ENCODE measurements at regions of chr17 and their contacts with region 1.

Region 1: GRCh38 chr17:29617125-29617480 is 5.6 kb downstream of the CORO6 start:
- DNase-seq: peak; percentile 81 to 96 (median 88)
- ATAC-seq: peak; percentile 69
- H3K4me3 ChIP-seq: peak overlapping the region; percentile 68
- H3K4me3 Mint-ChIP-seq: peak overlapping the region; percentile 91
- H3K27ac ChIP-seq: no peak overlapping the region
- H3K27ac Mint-ChIP-seq: peak overlapping the region; percentile 78
- H3K4me1 ChIP-seq: peaks cover 67% of the 10 kb centered on the region
- H3K4me1 Mint-ChIP-seq: peaks cover 47% of the 10 kb centered on the region
- H3K27me3 ChIP-seq: no peaks in the 10 kb centered on the region
- H3K27me3 Mint-ChIP-seq: no peaks in the 10 kb centered on the region
- CTCF ChIP-seq: peak; percentile 65

Region 2: DNA sequence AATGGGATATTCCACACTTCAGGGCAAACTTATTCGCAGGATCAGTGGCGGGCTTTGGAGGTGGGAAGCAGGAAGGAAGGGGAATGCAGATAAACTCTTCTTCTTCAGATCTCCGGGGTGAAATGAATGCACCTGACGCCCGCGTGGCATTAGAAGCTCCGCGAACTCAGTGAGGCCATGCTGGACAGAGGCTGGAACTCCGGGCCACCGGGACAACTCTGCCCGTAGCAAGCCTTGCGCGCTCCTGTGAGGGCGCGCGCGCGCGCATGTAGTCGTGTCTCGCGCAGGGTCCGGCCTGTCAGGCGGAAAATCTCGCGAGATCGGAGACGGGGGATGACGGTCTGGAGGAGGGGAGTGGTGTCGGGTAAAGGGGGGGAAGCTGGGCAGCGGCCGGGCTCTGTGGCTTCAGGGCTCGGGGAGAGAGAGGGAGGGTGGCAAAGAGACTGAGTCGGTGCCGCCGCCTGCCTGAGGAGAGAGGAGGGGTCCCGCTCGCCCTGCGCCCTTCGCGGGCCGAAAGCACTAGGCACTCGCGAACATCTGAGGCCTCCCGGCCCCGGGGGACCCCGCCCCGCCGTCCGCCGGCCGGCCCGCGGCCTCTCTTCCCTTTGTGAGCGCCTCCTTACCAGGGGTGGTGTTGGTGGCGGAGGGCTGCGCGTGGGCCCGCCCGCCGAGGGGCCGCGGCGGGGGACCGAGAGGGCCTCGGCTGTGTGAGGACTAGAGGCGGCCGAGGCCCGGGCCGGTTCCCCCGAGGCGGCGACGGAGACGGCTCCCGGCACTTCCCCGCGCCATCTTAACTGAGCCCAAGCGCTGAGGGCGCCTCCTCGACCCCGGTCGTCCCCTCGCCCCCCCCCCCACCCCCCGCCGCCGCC is 226.9 kb before region 1 on chr17 and contains the start of gene TAOK1:
- CTCF ChIA-PET with region 1: interaction called, 3 read pairs
- POLR2A ChIA-PET with region 1: no interaction called
- intact Hi-C with region 1: loop called in 1 of 2 experiments (anchors 5 kb)
- DNase-seq: peak; percentile 93 to 99 (median 98)
- ATAC-seq: peak; percentile 89
- H3K4me3 ChIP-seq: peak within 1 kb of the TSS; percentile 88
- H3K4me3 Mint-ChIP-seq: peak within 1 kb of the TSS; percentile 99
- H3K27ac ChIP-seq: peak within 1 kb of the TSS; percentile 79 to 93
- H3K27ac Mint-ChIP-seq: peak within 1 kb of the TSS; percentile 97
- H3K4me1 ChIP-seq: peaks cover 20% of the 10 kb centered on the region
- H3K4me1 Mint-ChIP-seq: peaks cover 47% of the 10 kb centered on the region
- H3K27me3 ChIP-seq: no peaks in the 10 kb centered on the region
- H3K27me3 Mint-ChIP-seq: no peaks in the 10 kb centered on the region
- CTCF ChIP-seq: no peak
- total RNA-seq, gene TAOK1: 33.1 to 33.8 TPM

Region 3: DNA sequence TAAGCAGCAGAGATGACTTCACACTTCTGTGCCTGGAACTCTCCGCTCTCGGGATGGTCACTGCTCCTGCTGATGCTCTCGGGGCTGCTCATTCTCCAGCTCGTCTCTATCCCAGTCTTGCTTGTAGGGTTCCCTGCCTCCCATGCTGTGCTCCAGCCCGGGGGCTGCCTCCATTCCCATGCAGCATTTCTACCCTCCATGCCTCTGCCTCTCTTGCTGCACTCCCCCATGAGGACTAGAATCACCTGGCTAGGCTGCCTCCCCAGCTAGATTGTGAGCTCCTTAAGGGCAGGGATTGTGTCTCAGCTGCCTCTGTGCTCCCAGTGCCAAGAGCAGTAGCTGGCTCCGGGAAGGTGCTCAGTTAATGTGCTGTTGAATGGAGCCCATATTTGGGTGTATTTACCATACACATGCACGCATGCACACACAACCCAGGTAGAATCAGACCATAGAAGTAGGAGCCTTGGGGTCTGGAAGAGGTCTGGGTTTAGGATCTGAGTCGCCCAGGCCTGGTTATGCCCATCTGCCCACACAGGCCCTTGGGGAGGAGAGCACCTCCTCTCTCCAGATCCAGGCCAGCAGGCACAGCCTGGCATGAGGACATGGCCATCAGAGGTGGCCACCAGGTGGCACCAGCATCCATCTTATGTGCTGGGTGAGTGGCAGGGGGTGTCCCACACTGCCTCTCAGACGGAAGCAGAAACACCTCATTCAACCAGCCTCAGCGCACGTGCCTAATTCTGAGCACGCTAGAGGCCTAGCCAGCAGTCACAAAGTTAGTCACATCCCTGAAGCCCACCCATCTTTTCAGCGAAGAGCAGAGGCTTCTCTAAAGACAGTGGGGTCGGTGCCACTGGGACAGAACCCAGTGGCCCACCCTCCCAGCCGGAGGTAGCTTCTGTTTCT is 37.0 kb before region 1 on chr17:
- CTCF ChIA-PET with region 1: interaction called, 48 read pairs
- POLR2A ChIA-PET with region 1: interaction called, 40 read pairs
- intact Hi-C with region 1: loop called (anchors 1 kb)
- DNase-seq: peak; percentile 84 to 95 (median 88)
- ATAC-seq: peak; percentile 99
- H3K4me3 ChIP-seq: no peak overlapping the region
- H3K4me3 Mint-ChIP-seq: peak overlapping the region; percentile 69
- H3K27ac ChIP-seq: no peak overlapping the region
- H3K27ac Mint-ChIP-seq: peak overlapping the region; percentile 41
- H3K4me1 ChIP-seq: peaks cover 27% of the 10 kb centered on the region
- H3K4me1 Mint-ChIP-seq: peaks cover 27% of the 10 kb centered on the region
- H3K27me3 ChIP-seq: no peaks in the 10 kb centered on the region
- H3K27me3 Mint-ChIP-seq: no peaks in the 10 kb centered on the region
- CTCF ChIP-seq: peak; percentile 88

Region 4: DNA sequence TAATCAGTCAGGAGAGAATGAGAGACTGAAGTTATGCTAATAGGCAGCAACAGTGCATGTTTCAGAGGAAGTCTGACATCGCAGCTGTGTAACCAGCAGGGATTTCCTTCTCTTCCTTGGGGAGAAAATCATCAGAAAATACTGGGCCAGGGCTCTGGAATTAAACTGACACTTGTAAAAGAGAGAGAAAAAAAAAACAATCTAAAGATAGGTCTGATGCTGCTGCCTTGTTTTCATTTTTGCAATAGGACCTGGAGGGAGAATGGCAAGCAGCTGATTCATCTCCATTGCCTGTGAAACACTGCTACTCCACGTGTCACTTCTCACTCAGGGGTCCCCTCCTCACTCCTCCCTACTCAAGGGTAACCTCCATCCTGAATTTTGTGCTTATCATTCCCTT is 23.3 kb after region 1 on chr17:
- CTCF ChIA-PET with region 1: interaction called, 19 read pairs
- POLR2A ChIA-PET with region 1: interaction called, 12 read pairs
- intact Hi-C with region 1: no loop called
- DNase-seq: no peak
- ATAC-seq: no peak
- H3K4me3 ChIP-seq: no peak overlapping the region
- H3K4me3 Mint-ChIP-seq: no peak overlapping the region
- H3K27ac ChIP-seq: no peak overlapping the region
- H3K27ac Mint-ChIP-seq: peak overlapping the region; percentile 77
- H3K4me1 ChIP-seq: no peaks in the 10 kb centered on the region
- H3K4me1 Mint-ChIP-seq: peaks cover 12% of the 10 kb centered on the region
- H3K27me3 ChIP-seq: no peaks in the 10 kb centered on the region
- H3K27me3 Mint-ChIP-seq: no peaks in the 10 kb centered on the region
- CTCF ChIP-seq: no peak

Region 5: DNA sequence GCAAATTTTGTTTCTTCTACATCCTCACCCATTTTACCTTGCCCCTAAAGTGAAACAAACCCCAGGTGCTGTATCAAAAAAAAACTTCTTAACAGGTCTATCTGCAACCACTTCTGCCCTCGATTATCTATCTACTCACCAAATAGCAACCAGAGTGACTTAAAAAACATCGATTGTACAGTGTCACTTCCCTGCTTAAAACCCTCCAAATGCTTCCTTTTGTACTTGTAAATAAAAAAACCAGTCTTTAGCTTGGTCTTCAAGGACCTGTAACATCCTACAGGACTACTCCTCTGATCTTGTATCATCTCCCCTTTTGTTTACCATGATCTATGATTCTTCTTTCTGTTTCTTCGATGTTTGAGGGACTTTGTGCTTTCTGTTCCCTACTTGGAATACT is 88.3 kb after region 1 on chr17:
- CTCF ChIA-PET with region 1: interaction called, 16 read pairs
- POLR2A ChIA-PET with region 1: interaction called, 16 read pairs
- intact Hi-C with region 1: no loop called
- DNase-seq: peak in 3 of 14 experiments; percentile 43 to 63 (median 50)
- ATAC-seq: no peak
- H3K4me3 ChIP-seq: peak overlapping the region; percentile 46
- H3K4me3 Mint-ChIP-seq: peak overlapping the region; percentile 71
- H3K27ac ChIP-seq: peak overlapping the region; percentile 81 to 91
- H3K27ac Mint-ChIP-seq: peak overlapping the region; percentile 92
- H3K4me1 ChIP-seq: peaks cover 37% of the 10 kb centered on the region
- H3K4me1 Mint-ChIP-seq: peaks cover 61% of the 10 kb centered on the region
- H3K27me3 ChIP-seq: no peaks in the 10 kb centered on the region
- H3K27me3 Mint-ChIP-seq: no peaks in the 10 kb centered on the region
- CTCF ChIP-seq: no peak

Region 6: DNA sequence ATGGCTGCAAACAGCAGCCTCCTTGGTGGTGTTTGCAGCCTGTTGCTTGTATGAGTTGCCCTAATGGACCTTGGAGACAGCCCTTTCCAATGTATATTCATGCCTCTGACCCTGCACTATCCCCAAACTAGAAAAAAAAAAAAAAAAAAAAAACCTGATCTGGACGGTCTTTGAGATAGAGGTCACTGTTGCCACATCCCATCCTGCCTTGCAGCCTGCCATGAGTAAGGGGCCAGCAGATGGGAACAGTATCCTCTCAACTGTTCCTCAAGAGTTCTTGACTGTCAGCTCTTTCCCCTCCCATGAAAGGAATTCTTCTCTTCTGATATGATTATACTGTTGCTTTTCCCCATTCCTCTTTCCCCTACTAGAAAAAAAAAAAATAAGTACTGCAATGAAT is 160.6 kb after region 1 on chr17:
- CTCF ChIA-PET with region 1: interaction called, 27 read pairs
- POLR2A ChIA-PET with region 1: interaction called, 16 read pairs
- intact Hi-C with region 1: loop called in 1 of 2 experiments (anchors 1 kb)
- DNase-seq: no peak
- ATAC-seq: no peak
- H3K4me3 ChIP-seq: no peak overlapping the region
- H3K4me3 Mint-ChIP-seq: no peak overlapping the region
- H3K27ac ChIP-seq: no peak overlapping the region
- H3K27ac Mint-ChIP-seq: no peak overlapping the region
- H3K4me1 ChIP-seq: peaks cover 3% of the 10 kb centered on the region
- H3K4me1 Mint-ChIP-seq: peaks cover 9% of the 10 kb centered on the region
- H3K27me3 ChIP-seq: no peaks in the 10 kb centered on the region
- H3K27me3 Mint-ChIP-seq: no peaks in the 10 kb centered on the region
- CTCF ChIP-seq: no peak